PC-9 (cell line): ENCODE measurements at regions of chr20 and their contacts with region 1.

Region 1: GRCh38 chr20:815914-816606 is 17.5 kb upstream of the FAM110A start:
- DNase-seq: peak in 1 of 2 experiments; percentile 60
- H3K4me3 ChIP-seq: no peak overlapping the region
- H3K27ac ChIP-seq: no peak overlapping the region
- H3K4me1 ChIP-seq: no peaks in the 10 kb centered on the region
- H3K27me3 ChIP-seq: no peaks in the 10 kb centered on the region; the same call in 1 of the 2 replicates
- CTCF ChIP-seq: peak; percentile 99

Region 2: GRCh38 chr20:760751-761417 is 55.2 kb before region 1 on chr20:
- CTCF ChIA-PET with region 1: no interaction called
- POLR2A ChIA-PET with region 1: no interaction called
- intact Hi-C with region 1: no loop called
- DNase-seq: no peak
- H3K4me3 ChIP-seq: no peak overlapping the region
- H3K27ac ChIP-seq: no peak overlapping the region
- H3K4me1 ChIP-seq: peaks cover 3% of the 10 kb centered on the region; the same call in 1 of the 2 replicates
- H3K27me3 ChIP-seq: no peaks in the 10 kb centered on the region
- CTCF ChIP-seq: peak; percentile 77

Region 3: GRCh38 chr20:833450-834150 is 17.5 kb after region 1 on chr20 and contains the start of gene FAM110A:
- CTCF ChIA-PET with region 1: no interaction called
- POLR2A ChIA-PET with region 1: interaction called, 12 read pairs
- intact Hi-C with region 1: no loop called
- DNase-seq: peak; percentile 81 to 96
- H3K4me3 ChIP-seq: peak within 1 kb of the TSS; percentile 97
- H3K27ac ChIP-seq: peak within 1 kb of the TSS; percentile 23; the same call in 1 of the 2 replicates
- H3K4me1 ChIP-seq: peaks cover 65% of the 10 kb centered on the region
- H3K27me3 ChIP-seq: no peaks in the 10 kb centered on the region
- CTCF ChIP-seq: no peak
- total RNA-seq, gene FAM110A: 30.8 and 36.6 TPM in 2 replicates

Region 4: GRCh38 chr20:956330-956951 is 140.4 kb after region 1 on chr20:
- CTCF ChIA-PET with region 1: interaction called, 27 read pairs
- POLR2A ChIA-PET with region 1: no interaction called
- intact Hi-C with region 1: loop called (anchors 1 kb)
- DNase-seq: peak in 1 of 2 experiments; percentile 74
- H3K4me3 ChIP-seq: no peak overlapping the region
- H3K27ac ChIP-seq: no peak overlapping the region
- H3K4me1 ChIP-seq: no peaks in the 10 kb centered on the region
- H3K27me3 ChIP-seq: peaks cover 24% of the 10 kb centered on the region
- CTCF ChIP-seq: peak; percentile 99

Region 5: DNA sequence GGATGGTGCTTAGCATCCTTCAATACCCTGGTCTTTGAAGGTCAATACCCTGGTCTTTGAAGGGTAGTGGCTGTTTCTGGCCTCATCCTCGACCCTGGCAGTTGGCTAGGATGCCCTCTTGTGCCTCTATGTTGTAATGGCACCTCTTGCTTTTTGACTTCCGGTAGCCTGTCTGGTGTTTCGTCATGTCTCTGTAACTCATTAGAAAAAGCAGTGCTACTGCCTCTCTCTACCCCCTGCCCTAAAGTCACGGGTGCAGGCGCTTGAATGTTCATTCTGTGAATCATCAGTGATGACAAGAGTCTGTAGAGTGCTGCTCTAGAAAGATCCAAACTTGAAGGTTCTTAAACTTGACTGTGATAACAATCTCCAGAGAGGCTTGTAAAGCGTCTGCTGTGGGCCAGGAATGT is 157.7 kb after region 1 on chr20:
- CTCF ChIA-PET with region 1: no interaction called
- POLR2A ChIA-PET with region 1: no interaction called
- intact Hi-C with region 1: loop called (anchors 1 kb)
- DNase-seq: peak; percentile 21 to 38
- H3K4me3 ChIP-seq: no peak overlapping the region
- H3K27ac ChIP-seq: no peak overlapping the region
- H3K4me1 ChIP-seq: no peaks in the 10 kb centered on the region
- H3K27me3 ChIP-seq: peaks cover 54% of the 10 kb centered on the region
- CTCF ChIP-seq: peak; percentile 54; the same call in 1 of the 2 replicates

Region 6: GRCh38 chr20:986733-987355 is 170.8 kb after region 1 on chr20:
- CTCF ChIA-PET with region 1: no interaction called
- POLR2A ChIA-PET with region 1: no interaction called
- intact Hi-C with region 1: no loop called
- DNase-seq: no peak
- H3K4me3 ChIP-seq: no peak overlapping the region
- H3K27ac ChIP-seq: no peak overlapping the region
- H3K4me1 ChIP-seq: no peaks in the 10 kb centered on the region
- H3K27me3 ChIP-seq: peaks cover 72% of the 10 kb centered on the region
- CTCF ChIP-seq: no peak

Region 7: GRCh38 chr20:1108437-1108920 is 292.4 kb after region 1 on chr20:
- CTCF ChIA-PET with region 1: interaction called, 3 read pairs
- POLR2A ChIA-PET with region 1: no interaction called
- intact Hi-C with region 1: loop called (anchors 1 kb)
- DNase-seq: peak in 1 of 2 experiments; percentile 50
- H3K4me3 ChIP-seq: no peak overlapping the region
- H3K27ac ChIP-seq: no peak overlapping the region
- H3K4me1 ChIP-seq: no peaks in the 10 kb centered on the region
- H3K27me3 ChIP-seq: no peaks in the 10 kb centered on the region; the same call in 1 of the 2 replicates
- CTCF ChIP-seq: peak; percentile 76

Region 8: DNA sequence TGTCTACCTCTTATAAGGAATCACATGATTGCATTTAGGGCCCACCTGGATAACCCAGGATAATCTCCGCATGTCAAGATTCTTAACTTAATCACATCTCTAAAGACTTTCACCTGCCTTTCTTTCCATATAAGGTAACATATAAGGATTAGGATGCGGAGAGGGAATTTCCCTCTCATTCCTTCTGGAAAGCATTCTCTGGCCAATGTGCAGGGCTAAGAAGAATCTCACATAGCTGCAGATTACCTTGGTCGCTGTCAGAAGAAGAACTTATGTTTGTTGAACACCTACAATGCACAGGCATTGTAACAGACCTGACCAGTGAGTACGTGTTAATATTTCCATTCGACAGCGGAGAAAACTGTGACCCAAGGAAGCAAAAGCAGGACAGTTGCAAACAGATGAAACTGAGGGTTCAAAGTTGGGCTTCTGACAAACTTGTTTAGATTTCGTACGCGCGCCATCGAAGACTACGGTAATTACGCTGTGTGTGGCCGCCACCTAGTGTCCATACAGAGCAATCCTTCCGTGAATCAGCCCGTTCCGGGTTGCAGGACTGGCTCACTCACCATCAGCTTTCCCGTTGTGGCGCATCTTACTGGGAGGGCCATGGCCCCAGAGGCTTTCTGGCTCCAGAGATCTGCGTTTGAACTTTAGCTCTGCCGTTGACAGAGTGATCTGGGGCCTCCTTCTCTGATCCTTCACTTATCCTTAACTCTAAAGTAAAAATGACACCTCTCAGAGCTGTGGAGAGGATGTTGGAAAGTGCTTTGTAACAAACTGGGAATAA is 396.7 kb after region 1 on chr20:
- CTCF ChIA-PET with region 1: no interaction called
- POLR2A ChIA-PET with region 1: no interaction called
- intact Hi-C with region 1: loop called (anchors 1 kb)
- DNase-seq: peak in 1 of 2 experiments; percentile 61
- H3K4me3 ChIP-seq: no peak overlapping the region
- H3K27ac ChIP-seq: no peak overlapping the region
- H3K4me1 ChIP-seq: no peaks in the 10 kb centered on the region
- H3K27me3 ChIP-seq: peaks cover 77% of the 10 kb centered on the region
- CTCF ChIP-seq: peak; percentile 82